ENCODE measurements at regions of chr19 and their contacts with region 1.

Region 1: GRCh38 chr19:14006243-14006765 is at the start of gene RFX1:
- DNase-seq: peak; percentile 99
- ATAC-seq: peak; percentile 70
- H3K4me3 ChIP-seq: peak within 1 kb of the TSS; percentile 74 to 96 (median 82)
- H3K4me3 Mint-ChIP-seq: peak within 1 kb of the TSS; percentile 90
- H3K27ac ChIP-seq: peak within 1 kb of the TSS; percentile 99 to 100
- H3K27ac Mint-ChIP-seq: peak within 1 kb of the TSS; percentile 97
- H3K4me1 ChIP-seq: peaks cover 42 to 48% of the 10 kb centered on the region in 2 donors
- H3K4me1 Mint-ChIP-seq: peaks cover 46% of the 10 kb centered on the region
- H3K27me3 ChIP-seq: no peaks in the 10 kb centered on the region
- H3K27me3 Mint-ChIP-seq: no peaks in the 10 kb centered on the region
- CTCF ChIP-seq: no peak
- total RNA-seq, gene RFX1: 33.3 and 33.9 TPM in 2 replicates

Region 2: GRCh38 chr19:12064590-12065538 is 1941.4 kb before region 1 on chr19 and contains the start of gene ZNF844:
- CTCF ChIA-PET with region 1: no interaction called
- POLR2A ChIA-PET with region 1: interaction called, 10 read pairs
- intact Hi-C with region 1: no loop called
- DNase-seq: peak; percentile 89
- ATAC-seq: peak; percentile 96
- H3K4me3 ChIP-seq: peak within 1 kb of the TSS; percentile 73 to 93 (median 76)
- H3K4me3 Mint-ChIP-seq: peak within 1 kb of the TSS; percentile 95
- H3K27ac ChIP-seq: peak within 1 kb of the TSS; percentile 83 to 87
- H3K27ac Mint-ChIP-seq: peak within 1 kb of the TSS; percentile 94
- H3K4me1 ChIP-seq: peaks cover 6 to 16% of the 10 kb centered on the region in 2 donors
- H3K4me1 Mint-ChIP-seq: peaks cover 11% of the 10 kb centered on the region
- H3K27me3 ChIP-seq: no peaks in the 10 kb centered on the region
- H3K27me3 Mint-ChIP-seq: no peaks in the 10 kb centered on the region
- CTCF ChIP-seq: no peak
- total RNA-seq, gene ZNF844: 33.7 and 36.4 TPM in 2 replicates

Region 3: GRCh38 chr19:13846557-13847406 is 159.5 kb before region 1 on chr19:
- CTCF ChIA-PET with region 1: no interaction called
- POLR2A ChIA-PET with region 1: interaction called, 4 read pairs
- intact Hi-C with region 1: loop called (anchors 1 kb)
- DNase-seq: peak; percentile 98
- ATAC-seq: peak; percentile 58
- H3K4me3 ChIP-seq: peak overlapping the region in 4 of 5 experiments; percentile 48 to 72 (median 50)
- H3K4me3 Mint-ChIP-seq: peak overlapping the region; percentile 89
- H3K27ac ChIP-seq: peak overlapping the region; percentile 91 to 98
- H3K27ac Mint-ChIP-seq: peak overlapping the region; percentile 99
- H3K4me1 ChIP-seq: peaks cover 51 to 63% of the 10 kb centered on the region in 2 donors
- H3K4me1 Mint-ChIP-seq: peaks cover 57% of the 10 kb centered on the region
- H3K27me3 ChIP-seq: peaks cover 0 to 22% (median 0%) of the 10 kb centered on the region in 4 experiments
- H3K27me3 Mint-ChIP-seq: no peaks in the 10 kb centered on the region
- CTCF ChIP-seq: no peak

Region 4: GRCh38 chr19:13986348-13986904 is 19.9 kb before region 1 on chr19:
- CTCF ChIA-PET with region 1: interaction called, 3 read pairs
- POLR2A ChIA-PET with region 1: interaction called, 42 read pairs
- intact Hi-C with region 1: loop called (anchors 1 kb)
- DNase-seq: peak; percentile 98
- ATAC-seq: peak; percentile 82
- H3K4me3 ChIP-seq: peak overlapping the region; percentile 9 to 54 (median 35)
- H3K4me3 Mint-ChIP-seq: peak overlapping the region; percentile 71
- H3K27ac ChIP-seq: peak overlapping the region; percentile 95 to 99
- H3K27ac Mint-ChIP-seq: peak overlapping the region; percentile 99
- H3K4me1 ChIP-seq: peaks cover 59 to 69% of the 10 kb centered on the region in 2 donors
- H3K4me1 Mint-ChIP-seq: peaks cover 67% of the 10 kb centered on the region
- H3K27me3 ChIP-seq: no peaks in the 10 kb centered on the region
- H3K27me3 Mint-ChIP-seq: no peaks in the 10 kb centered on the region
- CTCF ChIP-seq: no peak

Region 5: GRCh38 chr19:14081325-14082093 is 75.2 kb after region 1 on chr19:
- CTCF ChIA-PET with region 1: no interaction called
- POLR2A ChIA-PET with region 1: interaction called, 4 read pairs
- intact Hi-C with region 1: loop called (anchors 1 kb)
- DNase-seq: peak; percentile 99
- ATAC-seq: peak; percentile 91
- H3K4me3 ChIP-seq: peak overlapping the region; percentile 65 to 89 (median 77)
- H3K4me3 Mint-ChIP-seq: peak overlapping the region; percentile 96
- H3K27ac ChIP-seq: peak overlapping the region; percentile 72 to 89
- H3K27ac Mint-ChIP-seq: peak overlapping the region; percentile 96
- H3K4me1 ChIP-seq: peaks cover 14 to 18% of the 10 kb centered on the region in 2 donors
- H3K4me1 Mint-ChIP-seq: peaks cover 12% of the 10 kb centered on the region
- H3K27me3 ChIP-seq: no peaks in the 10 kb centered on the region
- H3K27me3 Mint-ChIP-seq: no peaks in the 10 kb centered on the region
- CTCF ChIP-seq: peak; percentile 10

Measured in B cell (primary cell).